K562 (cell line): ENCODE measurements at regions of chr20 and their contacts with region 1.

Region 1: DNA sequence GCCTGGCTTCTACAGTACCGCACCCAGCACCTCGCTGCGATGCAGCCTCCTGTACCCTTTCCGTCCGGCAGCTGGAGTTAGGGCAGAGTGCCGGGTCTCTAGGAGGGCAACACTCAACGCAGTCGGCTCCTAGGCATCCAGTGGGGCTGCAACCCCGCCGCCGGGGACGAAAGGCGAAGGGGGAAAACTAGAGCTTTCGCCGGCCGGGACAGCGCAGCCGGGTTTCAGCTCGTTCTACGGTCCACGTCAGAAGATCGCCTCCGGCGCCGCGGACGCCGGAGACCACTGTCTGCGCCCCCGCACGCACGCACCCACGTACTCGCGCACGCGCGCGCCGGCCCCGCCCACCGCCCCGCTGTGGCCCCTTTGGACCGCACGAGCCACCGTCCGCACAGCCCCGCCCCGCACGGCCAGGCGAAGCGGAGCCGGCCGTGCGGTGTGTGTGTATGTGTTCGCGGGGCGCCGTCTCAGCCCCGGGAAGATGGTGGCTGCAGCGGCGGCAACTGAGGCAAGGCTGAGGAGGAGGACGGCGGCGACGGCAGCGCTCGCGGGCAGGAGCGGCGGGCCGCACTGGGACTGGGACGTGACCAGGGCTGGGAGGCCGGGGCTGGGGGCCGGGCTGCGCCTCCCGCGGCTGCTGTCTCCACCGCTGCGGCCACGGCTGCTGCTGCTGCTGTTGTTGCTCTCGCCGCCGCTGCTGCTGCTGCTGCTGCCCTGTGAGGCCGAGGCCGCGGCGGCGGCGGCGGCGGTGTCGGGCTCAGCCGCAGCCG is at the start of gene ATRN:
- DNase-seq: peak; percentile 92 to 93 (median 93)
- ATAC-seq: peak; percentile 92
- H3K4me3 ChIP-seq: peak within 1 kb of the TSS; percentile 83
- H3K27ac ChIP-seq: peak within 1 kb of the TSS; percentile 89
- H3K4me1 ChIP-seq: peaks cover 14 to 23% of the 10 kb centered on the region in 2 experiments; a peak in 4 of 5 replicates
- H3K27me3 ChIP-seq: no peaks in the 10 kb centered on the region
- CTCF ChIP-seq: no peak
- EP300 ChIP-seq: no peak
- POLR2A ChIP-seq: peak; percentile 89
- RAD21 ChIP-seq: no peak
- polyA plus RNA-seq, gene ATRN: 0.69 to 1.6 TPM

Region 2: DNA sequence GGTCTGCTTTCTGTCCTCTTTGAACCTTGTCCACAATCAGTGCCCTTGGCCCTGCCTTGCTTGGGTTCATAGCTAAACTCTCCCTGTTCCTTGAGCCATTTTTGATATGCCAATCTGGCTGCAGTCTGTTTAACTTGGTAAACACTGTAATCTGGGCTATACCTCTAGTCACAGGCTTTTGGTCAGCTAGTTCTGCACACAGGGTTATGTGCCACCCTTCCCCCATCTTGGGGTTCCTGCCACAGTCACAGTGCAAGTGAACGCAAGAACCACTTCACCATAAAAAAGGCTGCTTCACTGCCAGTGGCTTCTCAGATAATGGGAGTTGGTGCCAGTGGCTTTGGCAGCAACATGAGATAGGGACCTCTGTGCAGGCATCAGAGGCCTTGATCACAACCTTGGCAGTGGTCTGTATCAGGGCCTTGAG is 10.9 kb before region 1 on chr20:
- CTCF ChIA-PET with region 1: no interaction called
- POLR2A ChIA-PET with region 1: interaction called, 12 read pairs
- in situ Hi-C with region 1: no loop called
- intact Hi-C with region 1: no loop called
- DNase-seq: no peak
- ATAC-seq: no peak
- H3K4me3 ChIP-seq: no peak overlapping the region
- H3K27ac ChIP-seq: no peak overlapping the region
- H3K4me1 ChIP-seq: no peaks in the 10 kb centered on the region; a peak in 2 of 5 replicates
- H3K27me3 ChIP-seq: no peaks in the 10 kb centered on the region
- CTCF ChIP-seq: no peak
- EP300 ChIP-seq: no peak
- POLR2A ChIP-seq: no peak
- RAD21 ChIP-seq: no peak